B cell (primary cell): ENCODE measurements at regions of chr9 and their contacts with region 1.

Region 1: GRCh38 chr9:137188490-137189296 is at the starts of genes ANAPC2 and SSNA1:
- DNase-seq: peak; percentile 97
- ATAC-seq: peak; percentile 84
- H3K4me3 ChIP-seq: peak within 1 kb of the TSS; percentile 50 to 99 (median 98)
- H3K4me3 Mint-ChIP-seq: peak within 1 kb of the TSS; percentile 96
- H3K27ac ChIP-seq: peak within 1 kb of the TSS; percentile 78 to 90
- H3K27ac Mint-ChIP-seq: peak within 1 kb of the TSS; percentile 97
- H3K4me1 ChIP-seq: peaks cover 26 to 40% of the 10 kb centered on the region in 2 donors
- H3K4me1 Mint-ChIP-seq: peaks cover 36% of the 10 kb centered on the region
- H3K27me3 ChIP-seq: no peaks in the 10 kb centered on the region
- H3K27me3 Mint-ChIP-seq: no peaks in the 10 kb centered on the region
- CTCF ChIP-seq: peak; percentile 49
- total RNA-seq, gene ANAPC2: 121 and 129 TPM in 2 replicates
- total RNA-seq, gene SSNA1: 52.9 and 53.6 TPM in 2 replicates

Region 2: DNA sequence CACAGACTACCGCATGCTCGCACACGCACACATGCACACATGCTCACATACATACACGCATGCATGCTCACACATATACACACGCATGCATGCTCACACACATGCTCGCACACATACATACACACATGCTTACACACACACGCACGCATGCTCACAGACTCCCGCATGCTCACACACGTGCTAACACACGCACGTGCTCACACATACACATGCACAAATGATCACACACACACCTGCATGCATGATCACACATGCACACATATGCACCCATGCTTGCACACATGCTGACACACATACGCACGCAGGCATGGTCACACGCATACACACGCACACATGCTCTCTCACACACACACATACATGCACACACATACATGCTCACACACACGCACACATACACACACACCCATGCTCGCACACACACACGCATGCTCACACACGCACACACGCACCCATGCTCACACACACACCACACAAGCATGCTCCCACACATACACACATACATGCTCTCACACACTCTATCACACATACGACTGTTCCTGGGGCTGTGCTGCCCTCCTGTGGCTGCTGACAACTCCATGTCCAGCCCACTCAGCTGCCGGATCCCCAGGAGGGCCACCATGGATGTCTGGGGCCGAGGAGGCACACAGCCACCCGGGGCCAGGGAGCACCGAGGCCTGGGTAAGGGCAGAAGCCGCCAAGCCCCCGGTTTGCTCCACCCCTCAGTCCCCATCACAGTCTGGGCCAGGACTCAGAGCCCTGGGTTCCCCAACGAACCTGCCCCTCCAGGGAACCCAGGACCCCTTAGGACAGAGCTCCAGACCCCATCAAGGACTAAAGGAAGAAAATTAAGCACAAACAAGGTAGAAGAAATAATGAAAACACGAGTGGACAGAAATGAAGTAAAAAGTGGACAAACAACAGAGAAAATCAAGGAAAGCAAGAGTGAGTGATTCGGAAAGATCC is 557.4 kb before region 1 on chr9:
- CTCF ChIA-PET with region 1: no interaction called
- POLR2A ChIA-PET with region 1: no interaction called
- intact Hi-C with region 1: no loop called
- DNase-seq: peak; percentile 88
- ATAC-seq: peak; percentile 87
- H3K4me3 ChIP-seq: no peak overlapping the region
- H3K4me3 Mint-ChIP-seq: no peak overlapping the region
- H3K27ac ChIP-seq: no peak overlapping the region
- H3K27ac Mint-ChIP-seq: no peak overlapping the region
- H3K4me1 ChIP-seq: peaks cover 11 to 21% of the 10 kb centered on the region in 2 donors
- H3K4me1 Mint-ChIP-seq: no peaks in the 10 kb centered on the region
- H3K27me3 ChIP-seq: peaks cover 0 to 25% (median 3%) of the 10 kb centered on the region in 4 experiments
- H3K27me3 Mint-ChIP-seq: peaks cover 10% of the 10 kb centered on the region
- CTCF ChIP-seq: peak; percentile 85

Region 3: GRCh38 chr9:137150617-137151457 is 37.9 kb before region 1 on chr9:
- CTCF ChIA-PET with region 1: no interaction called
- POLR2A ChIA-PET with region 1: interaction called, 15 read pairs
- intact Hi-C with region 1: no loop called
- DNase-seq: peak; percentile 77
- ATAC-seq: peak; percentile 55
- H3K4me3 ChIP-seq: no peak overlapping the region
- H3K4me3 Mint-ChIP-seq: no peak overlapping the region
- H3K27ac ChIP-seq: peak overlapping the region; percentile 11 to 84
- H3K27ac Mint-ChIP-seq: peak overlapping the region; percentile 61
- H3K4me1 ChIP-seq: peaks cover 0 to 13% of the 10 kb centered on the region in 2 donors
- H3K4me1 Mint-ChIP-seq: peaks cover 9% of the 10 kb centered on the region
- H3K27me3 ChIP-seq: peaks cover 0 to 21% (median under 1%) of the 10 kb centered on the region in 4 experiments
- H3K27me3 Mint-ChIP-seq: peaks cover 17% of the 10 kb centered on the region
- CTCF ChIP-seq: no peak

Region 4: DNA sequence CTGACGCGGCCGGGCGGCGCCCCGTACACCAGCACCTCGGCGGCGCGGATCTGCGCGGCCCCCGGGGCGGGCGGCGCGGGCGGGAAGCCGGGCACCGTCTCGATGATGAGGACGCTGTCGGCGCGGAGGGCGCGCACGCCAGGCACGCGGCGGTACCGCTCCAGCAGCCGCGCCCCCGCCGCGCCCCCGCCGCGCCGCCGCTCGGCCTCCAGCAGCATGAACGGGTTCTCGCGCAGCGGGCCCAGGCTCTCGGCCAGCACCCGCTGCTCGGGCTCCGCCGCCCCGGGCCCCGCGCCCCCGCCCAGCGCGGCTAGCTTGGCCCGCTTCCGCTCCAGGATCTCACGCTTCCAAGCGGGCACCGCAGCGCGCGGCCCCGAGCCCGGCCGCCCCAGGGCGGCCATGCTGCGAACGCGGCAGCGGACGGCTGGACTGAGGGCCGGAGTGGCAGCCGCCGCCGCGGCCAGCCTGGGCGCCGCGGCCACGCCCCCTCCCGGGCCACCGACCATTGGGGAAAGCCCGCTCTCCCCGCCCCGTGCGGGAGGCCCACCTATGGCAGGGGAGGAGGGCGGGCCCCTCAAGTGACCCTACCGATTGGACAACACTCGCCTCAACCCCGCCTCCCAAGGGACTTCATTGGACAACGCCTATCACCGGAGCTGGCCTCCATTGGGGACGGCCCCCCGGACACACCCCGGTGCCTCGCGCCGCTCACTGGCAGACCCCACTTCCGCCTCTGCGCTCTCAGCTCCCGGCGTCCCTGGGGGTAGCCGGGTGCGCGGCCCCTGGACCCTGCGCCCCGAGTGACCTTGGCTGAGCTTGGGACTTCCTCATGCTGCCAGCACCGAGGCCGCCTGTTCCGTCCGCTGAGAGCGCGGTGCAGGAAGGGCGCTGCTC is 11.9 kb after region 1 on chr9 and contains the start of gene TPRN:
- CTCF ChIA-PET with region 1: interaction called, 13 read pairs
- POLR2A ChIA-PET with region 1: interaction called, 18 read pairs
- intact Hi-C with region 1: loop called (anchors 1 kb)
- DNase-seq: peak; percentile 99
- ATAC-seq: peak; percentile 95
- H3K4me3 ChIP-seq: peak within 1 kb of the TSS; percentile 12 to 80 (median 75)
- H3K4me3 Mint-ChIP-seq: peak within 1 kb of the TSS; percentile 88
- H3K27ac ChIP-seq: peak within 1 kb of the TSS; percentile 78 to 89
- H3K27ac Mint-ChIP-seq: peak within 1 kb of the TSS; percentile 90
- H3K4me1 ChIP-seq: peaks cover 31 to 41% of the 10 kb centered on the region in 2 donors
- H3K4me1 Mint-ChIP-seq: peaks cover 29% of the 10 kb centered on the region
- H3K27me3 ChIP-seq: peaks cover 0 to 6% (median 0%) of the 10 kb centered on the region in 4 experiments
- H3K27me3 Mint-ChIP-seq: no peaks in the 10 kb centered on the region
- CTCF ChIP-seq: no peak
- total RNA-seq, gene TPRN: 16.3 and 19.3 TPM in 2 replicates